ENCODE measurements at regions of chr17 and their contacts with region 1.

Region 1: GRCh38 chr17:75012346-75013091 is at the start of gene MRPL58:
- DNase-seq: peak; percentile 86
- H3K4me3 Mint-ChIP-seq: peak within 1 kb of the TSS; percentile 93
- H3K27ac Mint-ChIP-seq: peak within 1 kb of the TSS; percentile 84
- H3K4me1 Mint-ChIP-seq: peaks cover 30% of the 10 kb centered on the region
- H3K27me3 Mint-ChIP-seq: no peaks in the 10 kb centered on the region
- total RNA-seq, gene MRPL58: 45.4 to 49.6 TPM

Region 2: GRCh38 chr17:74873038-74873873 is 139.3 kb before region 1 on chr17:
- CTCF ChIA-PET with region 1: no interaction called
- POLR2A ChIA-PET with region 1: interaction called, 12 read pairs
- DNase-seq: peak; percentile 100
- H3K4me3 Mint-ChIP-seq: peak overlapping the region; percentile 96
- H3K27ac Mint-ChIP-seq: peak overlapping the region; percentile 86
- H3K4me1 Mint-ChIP-seq: peaks cover 40% of the 10 kb centered on the region
- H3K27me3 Mint-ChIP-seq: no peaks in the 10 kb centered on the region

Region 3: GRCh38 chr17:74987418-74987908 is 25.1 kb before region 1 on chr17 and contains the start of gene CDR2L:
- CTCF ChIA-PET with region 1: interaction called, 29 read pairs
- POLR2A ChIA-PET with region 1: interaction called, 39 read pairs
- DNase-seq: peak; percentile 91
- H3K4me3 Mint-ChIP-seq: peak within 1 kb of the TSS; percentile 70
- H3K27ac Mint-ChIP-seq: peak within 1 kb of the TSS; percentile 7
- H3K4me1 Mint-ChIP-seq: peaks cover 21% of the 10 kb centered on the region
- H3K27me3 Mint-ChIP-seq: peaks cover 34% of the 10 kb centered on the region
- total RNA-seq, gene CDR2L: 0.50 to 0.63 TPM

Region 4: DNA sequence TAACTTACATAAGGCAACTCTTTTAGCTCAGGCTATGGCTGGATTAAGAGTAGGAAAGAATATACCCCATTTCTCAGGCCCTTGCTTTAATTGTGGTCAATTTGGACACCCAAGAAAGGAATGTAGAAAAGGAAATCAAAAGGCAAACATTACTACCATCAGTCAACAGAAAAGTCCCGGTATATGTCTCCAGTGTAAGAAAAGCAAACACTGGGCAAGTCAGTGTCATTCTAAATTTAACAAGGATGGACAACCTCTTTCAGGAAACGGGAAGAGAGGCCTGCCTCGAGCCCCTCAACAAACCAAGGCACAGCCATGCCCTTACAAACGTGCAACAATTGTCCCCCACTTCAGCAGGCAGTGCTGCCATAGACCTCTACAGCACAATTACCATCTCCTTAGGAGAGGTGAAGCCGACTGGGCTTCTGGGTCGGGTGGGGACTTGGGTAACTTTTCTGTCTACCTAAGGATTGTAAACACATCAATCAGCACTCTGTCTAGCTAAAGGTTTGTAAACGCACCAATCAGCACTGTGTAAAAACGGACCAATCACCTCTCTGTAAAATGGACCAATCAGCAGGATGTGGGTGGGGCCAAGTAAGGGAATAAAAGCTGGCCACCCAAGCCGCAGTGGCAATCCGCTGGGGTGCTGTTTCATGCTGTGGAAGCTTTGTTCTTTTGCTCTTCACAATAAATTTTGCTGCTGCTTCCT is 12.3 kb after region 1 on chr17:
- CTCF ChIA-PET with region 1: interaction called, 16 read pairs
- POLR2A ChIA-PET with region 1: interaction called, 25 read pairs
- DNase-seq: peak; percentile 54
- H3K4me3 Mint-ChIP-seq: no peak overlapping the region
- H3K27ac Mint-ChIP-seq: no peak overlapping the region
- H3K4me1 Mint-ChIP-seq: peaks cover 16% of the 10 kb centered on the region
- H3K27me3 Mint-ChIP-seq: peaks cover 2% of the 10 kb centered on the region

Region 5: DNA sequence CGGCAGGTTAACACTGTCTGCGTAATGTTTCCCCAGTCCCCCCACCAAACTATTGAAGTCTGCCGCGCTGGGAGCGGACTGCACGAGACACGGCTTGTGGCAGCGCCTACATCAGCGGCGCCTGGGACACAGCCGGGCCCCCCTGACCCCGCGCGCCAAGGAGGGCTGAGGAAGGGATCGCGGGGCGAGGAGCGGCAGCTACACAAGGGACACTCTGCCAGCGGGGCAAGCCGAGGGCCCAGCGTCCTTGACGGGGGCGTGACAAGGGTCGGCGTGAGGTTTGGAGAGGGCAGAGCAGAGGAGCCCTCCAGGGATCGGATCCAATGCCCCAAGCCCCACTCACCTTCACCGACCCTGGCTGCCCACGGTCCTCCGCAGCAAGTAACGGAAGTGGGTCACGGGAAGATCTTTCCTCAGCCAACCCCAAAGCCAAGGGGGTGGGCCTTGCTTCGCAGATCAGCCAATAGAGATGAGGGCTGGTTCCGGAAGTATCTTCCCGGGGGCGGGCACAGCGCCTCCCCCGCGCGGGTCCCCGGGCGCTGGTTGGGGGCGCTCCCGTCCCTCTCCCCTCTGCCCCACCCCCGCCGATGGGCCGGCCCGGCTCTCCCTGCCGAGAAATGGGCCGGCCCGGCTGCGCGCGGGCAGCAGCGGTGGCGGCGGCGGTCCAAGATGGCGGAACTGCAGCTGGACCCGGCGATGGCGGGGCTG is 34.2 kb after region 1 on chr17 and contains the starts of genes ATP5PD and KCTD2:
- CTCF ChIA-PET with region 1: interaction called, 6 read pairs
- POLR2A ChIA-PET with region 1: interaction called, 30 read pairs
- DNase-seq: peak; percentile 96
- H3K4me3 Mint-ChIP-seq: peak within 1 kb of the TSS; percentile 96
- H3K27ac Mint-ChIP-seq: peak within 1 kb of the TSS; percentile 91
- H3K4me1 Mint-ChIP-seq: peaks cover 45% of the 10 kb centered on the region
- H3K27me3 Mint-ChIP-seq: no peaks in the 10 kb centered on the region
- total RNA-seq, gene ATP5PD: 242 TPM
- total RNA-seq, gene KCTD2: 24.2 to 24.9 TPM

Region 6: DNA sequence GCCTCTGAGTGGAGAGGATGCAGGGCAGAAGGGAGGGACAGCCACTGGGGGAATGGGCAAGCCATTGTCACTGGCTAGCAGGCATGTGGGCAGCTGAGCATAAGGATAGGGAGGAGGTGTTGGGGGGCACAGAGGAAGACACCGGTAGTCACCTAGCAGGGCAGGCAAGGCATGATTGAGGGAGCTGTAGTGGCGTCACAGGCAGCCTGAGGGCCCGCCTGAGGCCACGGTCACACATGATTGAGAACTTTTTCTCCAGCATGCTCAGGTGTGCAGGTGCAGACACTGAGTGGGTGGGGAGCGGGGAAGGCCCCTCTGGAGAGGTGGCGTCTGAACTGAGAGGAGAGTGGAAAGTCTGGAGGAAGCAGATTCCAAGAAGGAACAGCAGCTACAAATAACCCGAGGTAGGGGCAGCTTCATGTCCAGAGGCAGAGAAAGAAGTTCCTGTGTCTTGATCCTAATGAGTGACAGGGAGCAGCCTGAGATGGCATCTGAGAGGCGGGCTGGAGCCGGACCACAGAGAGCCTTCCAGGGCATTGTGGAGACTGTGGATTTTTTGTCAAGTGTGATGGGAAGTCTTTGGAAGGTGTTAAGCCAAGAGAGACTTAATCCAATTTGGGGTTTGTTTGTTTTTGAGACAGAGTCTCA is 86.4 kb after region 1 on chr17:
- CTCF ChIA-PET with region 1: no interaction called
- POLR2A ChIA-PET with region 1: no interaction called
- DNase-seq: no peak
- H3K4me3 Mint-ChIP-seq: no peak overlapping the region
- H3K27ac Mint-ChIP-seq: no peak overlapping the region
- H3K4me1 Mint-ChIP-seq: peaks cover 4% of the 10 kb centered on the region
- H3K27me3 Mint-ChIP-seq: no peaks in the 10 kb centered on the region